ENCODE measurements at regions of chr5 and their contacts with region 1.

Region 1: GRCh38 chr5:18699681-18700080 is 1065.4 kb downstream of the TAF11L14 start:
- DNase-seq: no peak
- H3K4me3 Mint-ChIP-seq: no peak overlapping the region
- H3K27ac Mint-ChIP-seq: no peak overlapping the region
- H3K4me1 Mint-ChIP-seq: peaks cover 9% of the 10 kb centered on the region
- H3K27me3 Mint-ChIP-seq: no peaks in the 10 kb centered on the region
- CTCF ChIP-seq: no peak

Region 2: DNA sequence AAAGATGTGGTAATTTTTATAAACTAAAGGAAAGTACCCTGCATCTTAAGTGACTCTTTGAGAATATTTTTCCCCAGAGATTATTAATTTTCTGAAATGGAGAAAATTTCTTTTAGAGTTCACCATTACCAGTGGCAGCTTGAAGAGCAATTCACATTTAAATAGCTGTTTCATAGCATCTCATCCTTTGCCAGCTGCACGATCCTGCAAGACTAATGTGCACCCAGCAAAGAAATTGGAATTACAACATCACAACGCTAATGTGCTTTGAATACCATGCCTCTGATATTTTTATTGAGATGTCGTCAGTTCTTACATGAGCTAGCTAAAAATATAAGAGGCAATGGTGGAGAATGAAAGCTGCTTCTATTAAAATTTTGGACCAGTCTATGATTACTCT is 642.0 kb before region 1 on chr5:
- CTCF ChIA-PET with region 1: no interaction called
- intact Hi-C with region 1: no loop called
- DNase-seq: no peak
- H3K4me3 Mint-ChIP-seq: no peak overlapping the region
- H3K27ac Mint-ChIP-seq: no peak overlapping the region
- H3K4me1 Mint-ChIP-seq: no peaks in the 10 kb centered on the region
- H3K27me3 Mint-ChIP-seq: no peaks in the 10 kb centered on the region
- CTCF ChIP-seq: no peak

Region 3: GRCh38 chr5:18393589-18394442 is 305.9 kb before region 1 on chr5:
- CTCF ChIA-PET with region 1: no interaction called
- intact Hi-C with region 1: loop called (anchors 1 kb)
- DNase-seq: peak; percentile 64
- H3K4me3 Mint-ChIP-seq: no peak overlapping the region
- H3K27ac Mint-ChIP-seq: no peak overlapping the region
- H3K4me1 Mint-ChIP-seq: no peaks in the 10 kb centered on the region
- H3K27me3 Mint-ChIP-seq: no peaks in the 10 kb centered on the region
- CTCF ChIP-seq: peak; percentile 80

Measured in Calu3 (cell line).